ENCODE measurements at regions of chr5 and their contacts with region 1.

Region 1: DNA sequence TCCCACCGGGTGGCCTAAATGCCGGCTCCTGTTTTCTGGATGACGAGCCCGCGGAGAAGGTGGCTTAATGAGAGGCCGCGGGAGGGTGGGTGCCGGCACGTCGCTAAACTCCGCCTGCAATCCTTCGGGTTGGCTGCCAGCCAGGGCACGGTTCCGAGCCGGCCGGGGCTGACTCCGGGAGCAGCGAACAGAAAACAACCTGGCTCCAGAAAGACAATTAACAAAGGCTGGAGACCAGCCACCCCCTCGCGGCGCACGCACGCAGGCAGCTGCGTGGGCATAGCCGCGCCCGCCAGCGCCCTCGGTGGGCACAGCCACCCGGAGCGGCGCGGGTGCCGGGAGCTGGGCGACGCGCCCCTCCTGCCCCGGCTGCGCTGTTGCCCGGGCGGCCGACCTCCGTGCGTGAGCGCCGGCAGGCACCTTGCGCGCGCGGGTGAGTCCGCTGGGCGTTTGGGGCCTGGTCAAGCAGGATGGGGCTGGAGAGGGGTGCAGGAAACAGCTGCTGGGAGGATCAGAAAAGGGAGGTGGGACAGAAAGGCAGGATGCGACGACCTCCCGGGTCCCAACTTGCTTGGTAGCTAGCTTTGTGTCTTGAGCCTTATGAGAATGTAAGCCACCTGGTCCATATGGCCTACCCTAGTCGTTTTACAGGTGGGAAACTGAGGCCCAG is at the start of gene ARHGEF37:
- DNase-seq: peak; percentile 73
- ATAC-seq: peak; percentile 76
- H3K4me3 Mint-ChIP-seq: peak within 1 kb of the TSS; percentile 66
- H3K27ac Mint-ChIP-seq: peak within 1 kb of the TSS; percentile 55
- H3K4me1 Mint-ChIP-seq: peaks cover 19% of the 10 kb centered on the region
- H3K27me3 Mint-ChIP-seq: peaks cover 4% of the 10 kb centered on the region
- total RNA-seq, gene ARHGEF37: 1.7 to 2.1 TPM

Region 2: DNA sequence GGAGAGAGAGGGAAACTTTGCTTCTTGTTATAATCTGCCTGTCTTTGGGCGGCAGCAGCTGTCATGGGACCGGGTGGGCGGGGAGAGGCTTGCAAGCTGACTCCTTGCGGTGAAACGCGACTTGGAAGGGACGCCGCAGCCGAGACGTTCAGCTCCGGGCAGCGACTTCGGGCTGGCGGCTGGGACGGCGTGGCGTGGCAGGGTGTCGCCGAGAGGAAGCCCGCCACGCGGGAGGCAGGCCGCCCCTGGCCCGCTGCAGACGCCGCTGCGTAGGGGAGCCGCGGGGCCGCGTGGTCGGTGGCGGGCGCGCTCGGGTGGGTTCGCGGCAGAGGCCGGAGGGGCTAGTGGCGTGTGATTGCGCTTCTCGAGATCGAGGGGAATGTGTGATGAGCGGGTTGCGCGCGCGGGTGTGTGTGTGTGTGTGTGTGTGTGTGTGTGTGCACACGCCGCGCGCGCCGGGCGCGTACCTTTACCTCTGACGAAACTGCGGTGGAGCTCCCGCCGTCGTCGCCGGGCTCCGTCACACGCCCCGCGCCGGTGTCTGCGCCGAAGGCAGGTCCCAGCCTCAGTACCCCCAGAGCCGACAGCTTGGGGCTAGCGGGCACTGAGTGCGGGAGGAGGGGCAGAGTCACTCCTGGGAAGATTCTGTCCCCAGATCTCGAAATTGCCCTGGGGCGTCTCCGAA is 150.5 kb after region 1 on chr5:
- CTCF ChIA-PET with region 1: no interaction called
- POLR2A ChIA-PET with region 1: no interaction called
- intact Hi-C with region 1: loop called in 1 of 2 experiments (anchors 5 kb)
- DNase-seq: peak; percentile 90
- ATAC-seq: peak; percentile 48
- H3K4me3 Mint-ChIP-seq: peak overlapping the region; percentile 79
- H3K27ac Mint-ChIP-seq: no peak overlapping the region
- H3K4me1 Mint-ChIP-seq: peaks cover 2% of the 10 kb centered on the region
- H3K27me3 Mint-ChIP-seq: no peaks in the 10 kb centered on the region

Region 3: DNA sequence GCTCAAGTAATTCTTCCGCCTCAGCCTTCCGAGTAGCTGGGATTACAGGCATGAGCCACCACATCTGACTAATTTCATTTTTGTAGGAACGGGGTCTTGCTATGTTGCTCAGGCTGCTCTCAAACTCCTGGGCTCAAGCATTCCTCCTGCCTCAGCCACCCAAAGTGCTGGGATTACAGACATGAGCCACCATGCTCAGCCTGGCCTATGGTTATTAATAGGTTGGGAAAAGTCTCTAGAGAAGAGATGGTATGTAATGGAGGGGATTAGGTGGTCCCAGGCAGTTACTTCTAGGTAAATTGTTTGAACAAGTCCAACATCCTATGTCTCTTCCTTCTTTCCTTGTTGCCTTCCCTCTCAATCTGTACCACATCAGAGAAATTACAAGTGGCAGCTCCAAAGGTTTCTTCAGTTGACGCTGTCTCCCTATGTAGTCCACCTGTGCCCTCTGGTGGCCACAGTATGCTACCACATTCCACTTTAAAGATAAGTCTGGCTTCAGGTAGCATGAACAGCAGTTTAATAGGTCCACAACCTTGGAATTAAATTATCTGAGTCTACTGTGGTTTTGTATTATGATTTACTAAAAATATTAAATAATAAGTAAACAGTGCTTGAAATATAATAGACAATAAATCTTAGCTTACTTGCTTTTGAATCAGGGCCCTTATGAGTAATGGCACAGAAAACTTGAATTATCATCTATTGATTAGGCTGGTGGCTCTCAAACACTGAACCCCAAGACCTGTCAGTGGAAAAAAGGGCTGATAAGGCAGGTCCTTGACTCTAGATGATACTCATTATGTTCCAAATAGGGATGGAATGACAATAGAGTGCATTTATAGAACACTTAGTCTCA is 409.4 kb after region 1 on chr5:
- CTCF ChIA-PET with region 1: no interaction called
- POLR2A ChIA-PET with region 1: no interaction called
- intact Hi-C with region 1: no loop called
- DNase-seq: peak; percentile 81
- ATAC-seq: peak; percentile 94
- H3K4me3 Mint-ChIP-seq: no peak overlapping the region
- H3K27ac Mint-ChIP-seq: no peak overlapping the region
- H3K4me1 Mint-ChIP-seq: no peaks in the 10 kb centered on the region
- H3K27me3 Mint-ChIP-seq: no peaks in the 10 kb centered on the region

Measured in activated CD4-positive, alpha-beta T cell treated with anti-CD3 and anti-CD28 coated beads for 36 hours (primary cell).